ENCODE measurements at regions of chr2 and their contacts with region 1.

Region 1: DNA sequence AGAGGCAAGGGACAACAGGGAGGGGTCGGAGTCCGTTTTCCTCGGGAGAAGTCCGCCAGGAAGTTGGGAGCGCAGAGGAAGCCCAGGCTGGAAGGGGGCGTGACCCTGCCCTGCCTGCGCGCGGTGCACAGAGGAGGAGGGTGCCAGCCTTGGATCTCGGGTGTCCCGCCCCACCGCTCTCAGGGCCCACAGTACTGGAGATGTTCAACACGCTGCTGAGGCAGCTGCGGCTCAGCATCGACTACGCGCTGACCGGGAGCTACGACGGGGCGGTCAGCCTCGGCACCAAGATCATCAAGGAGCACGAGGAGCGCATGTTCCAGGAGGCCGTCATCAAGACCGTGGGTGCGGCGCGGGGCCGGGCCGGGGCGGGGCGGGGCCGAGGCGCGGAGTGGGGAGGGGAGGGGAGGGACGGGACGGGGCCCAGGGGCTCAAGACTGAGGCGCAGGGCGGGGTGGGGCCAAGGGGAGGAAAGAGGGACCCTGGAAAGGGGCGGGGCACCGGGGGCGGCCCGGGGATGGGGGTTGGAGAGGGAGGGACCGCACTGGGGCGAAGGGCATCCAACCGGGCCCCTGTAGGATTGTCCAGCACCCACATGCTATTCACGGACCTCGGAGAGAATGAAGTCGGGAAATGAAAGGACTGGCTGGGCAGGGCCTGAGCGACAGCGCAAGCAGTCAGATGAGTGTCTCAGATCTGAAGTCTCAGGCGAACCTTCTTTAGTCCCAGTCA is 36.6 kb downstream of the POMC start:
- DNase-seq: no peak
- H3K4me3 ChIP-seq: peak overlapping the region in 9 of 59 donors; percentile 8 to 42 (median 10)
- H3K27ac ChIP-seq: no peak overlapping the region
- H3K27me3 ChIP-seq: no peaks in the 10 kb centered on the region
- CTCF ChIP-seq: no peak

Region 2: DNA sequence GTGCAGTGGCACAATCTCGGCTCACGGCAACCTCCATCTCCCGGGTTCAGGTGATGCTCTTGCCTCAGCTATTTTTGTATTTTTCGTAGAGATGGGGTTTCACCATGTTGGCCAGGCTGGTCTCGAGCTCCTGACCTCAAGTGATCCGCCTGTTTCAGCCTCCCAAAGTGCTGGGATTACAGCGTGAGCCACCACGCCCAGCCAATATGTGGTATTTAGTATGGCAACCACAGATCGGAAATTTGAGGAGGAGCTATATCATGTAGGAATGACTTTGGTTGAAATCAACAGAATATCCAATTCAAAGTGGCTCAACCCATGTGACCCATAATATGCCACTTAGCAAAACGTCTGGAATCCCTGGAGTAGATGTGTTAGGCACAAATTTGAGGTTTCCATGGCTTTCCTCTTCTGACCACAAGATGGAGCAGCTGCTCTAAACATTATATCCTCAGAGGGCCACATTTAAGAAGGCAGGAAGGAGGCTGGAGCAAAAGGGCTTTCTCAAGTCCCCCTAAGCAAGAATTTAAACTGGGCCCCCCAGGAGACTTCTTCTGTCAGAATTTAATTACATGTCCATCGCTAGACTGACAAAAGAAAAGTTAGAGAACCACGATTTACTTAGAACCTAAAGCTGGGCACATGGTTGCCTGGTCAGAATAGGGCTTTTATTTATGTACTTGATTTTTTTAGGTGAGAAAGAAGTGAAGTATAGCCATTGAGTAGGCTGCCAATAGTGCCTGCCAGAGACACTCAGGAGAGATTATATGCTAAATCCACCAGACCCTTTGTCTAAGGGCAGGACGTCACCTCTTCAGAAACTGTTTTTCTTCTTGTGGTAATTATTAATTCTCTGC is 721.8 kb before region 1 on chr2:
- intact Hi-C with region 1: loop called in 1 of 2 experiments (anchors 5 kb)
- DNase-seq: peak in 3 of 10 donors; percentile 30 to 58 (median 43)
- H3K4me3 ChIP-seq: no peak overlapping the region
- H3K27ac ChIP-seq: no peak overlapping the region
- H3K27me3 ChIP-seq: no peaks in the 10 kb centered on the region
- CTCF ChIP-seq: peak; percentile 59 to 94 (median 86)

Region 3: DNA sequence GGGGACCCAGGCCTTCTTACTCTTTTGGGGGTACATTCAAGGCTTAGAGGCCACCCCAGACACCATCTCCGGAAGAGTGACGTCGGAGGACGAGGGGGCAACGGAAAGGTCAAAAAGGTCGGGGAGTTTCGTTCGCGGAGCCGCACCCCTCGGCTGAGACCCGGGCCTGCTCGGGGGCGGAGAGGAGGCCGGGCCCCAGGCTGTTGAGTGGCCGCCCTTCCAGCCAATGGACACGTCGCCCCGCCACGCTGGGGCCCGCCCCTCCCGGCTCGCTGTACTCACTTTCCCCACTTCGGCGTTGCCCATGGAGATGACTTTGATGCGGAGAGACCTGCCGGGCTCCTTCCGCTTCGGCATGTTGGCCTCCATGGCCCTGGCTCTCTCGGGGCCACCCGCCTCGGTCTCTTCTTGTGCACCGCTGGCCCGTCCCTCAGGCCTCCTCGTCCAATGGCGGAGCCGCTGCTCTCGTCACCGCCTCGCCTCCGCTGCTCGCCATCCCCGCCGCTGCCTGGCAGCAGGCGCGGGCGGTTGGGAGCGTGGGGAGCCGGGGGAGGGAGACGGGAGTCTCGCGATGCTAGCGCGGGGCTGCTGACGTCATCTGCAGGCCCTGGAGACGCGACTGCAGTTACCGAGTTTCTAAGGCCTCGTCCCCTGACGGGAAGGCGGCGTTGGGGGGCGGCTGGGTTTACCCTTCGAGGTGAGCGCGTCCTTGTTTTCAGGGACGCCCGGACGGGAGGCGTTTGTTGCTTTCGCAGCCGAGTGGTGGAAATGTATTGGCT is 160.0 kb before region 1 on chr2 and contains the start of gene DNAJC27:
- intact Hi-C with region 1: loop called (anchors 1 kb)
- DNase-seq: peak; percentile 95 to 99 (median 98)
- H3K4me3 ChIP-seq: peak within 1 kb of the TSS; percentile 61 to 98 (median 91)
- H3K27ac ChIP-seq: peak within 1 kb of the TSS; percentile 96 to 100 (median 99)
- H3K27me3 ChIP-seq: no peaks in the 10 kb centered on the region
- CTCF ChIP-seq: peak in 26 of 56 donors; percentile 4 to 45 (median 18)
- total RNA-seq, gene DNAJC27: 10.6 to 31.2 (median 20.7) TPM

Region 4: GRCh38 chr2:24993406-24994145 is 138.2 kb before region 1 on chr2:
- intact Hi-C with region 1: no loop called
- DNase-seq: no peak
- H3K4me3 ChIP-seq: no peak overlapping the region
- H3K27ac ChIP-seq: peak overlapping the region in 2 of 59 donors; percentile 18 to 19
- H3K27me3 ChIP-seq: no peaks in the 10 kb centered on the region
- CTCF ChIP-seq: no peak

Region 5: DNA sequence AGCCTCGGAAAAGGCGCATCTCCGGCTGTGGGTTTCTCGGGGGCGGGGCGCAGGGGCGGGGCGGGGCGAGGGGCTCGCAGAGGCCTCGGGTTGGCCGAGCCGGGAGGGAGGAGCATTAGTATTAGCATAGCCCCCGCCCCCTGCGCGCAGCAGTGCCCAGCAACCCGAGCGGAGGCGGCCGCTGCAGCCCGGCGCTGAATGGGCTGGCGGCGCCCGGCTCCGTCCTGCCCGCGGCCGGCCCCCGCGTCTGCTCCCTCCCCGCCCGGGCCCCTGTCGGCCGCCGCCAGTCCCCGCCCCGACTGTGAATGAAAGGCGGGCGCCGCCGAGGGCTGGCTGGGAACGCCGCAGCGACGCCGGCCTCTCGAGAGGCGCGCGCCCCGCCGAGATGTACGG is 89.8 kb before region 1 on chr2 and contains the start of gene EFR3B:
- intact Hi-C with region 1: loop called (anchors 2 to 5 kb)
- DNase-seq: peak; percentile 92 to 97 (median 96)
- H3K4me3 ChIP-seq: peak within 1 kb of the TSS; percentile 70 to 98 (median 87)
- H3K27ac ChIP-seq: peak within 1 kb of the TSS; percentile 52 to 96 (median 91)
- H3K27me3 ChIP-seq: no peaks in the 10 kb centered on the region
- CTCF ChIP-seq: peak in 16 of 56 donors; percentile 1 to 45 (median 26)
- total RNA-seq, gene EFR3B: 44.3 to 131 (median 75.5) TPM

Region 6: DNA sequence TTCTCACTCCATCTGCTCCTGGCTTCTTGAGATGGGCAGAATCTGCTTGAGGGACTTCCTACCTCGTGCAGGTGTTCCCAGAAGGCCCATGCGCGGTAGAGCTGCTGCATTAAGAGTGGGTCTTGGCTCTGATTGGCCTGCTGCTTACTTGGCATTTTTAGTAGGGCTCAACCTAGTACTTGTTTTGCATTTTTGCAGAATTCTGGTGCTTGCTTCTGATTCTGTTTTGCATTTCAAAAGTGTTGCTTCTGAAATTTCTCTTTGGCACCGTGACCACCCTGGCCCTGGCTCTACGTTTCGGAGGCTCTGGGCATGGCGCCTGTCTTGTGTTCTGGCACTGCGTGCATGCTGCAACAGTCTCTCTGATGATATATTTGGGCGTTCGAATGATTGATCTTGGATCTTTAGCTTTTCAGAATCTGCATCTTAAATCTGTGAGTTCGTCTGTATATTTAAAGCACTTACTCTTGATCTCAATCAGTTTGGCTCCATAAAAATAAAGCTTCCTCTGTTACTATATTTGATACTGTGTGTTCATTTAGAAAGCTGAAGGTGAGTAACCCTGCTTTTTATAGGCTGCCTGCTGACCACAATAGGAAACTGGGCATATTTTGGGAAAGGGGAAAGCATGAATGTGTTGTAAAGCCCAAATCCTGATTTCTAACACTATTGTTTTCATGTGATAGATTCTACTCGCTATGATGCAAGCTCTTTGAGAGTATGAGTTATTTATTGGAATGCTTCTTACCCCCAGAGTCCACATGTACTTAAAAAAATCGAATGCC is 67.7 kb before region 1 on chr2:
- intact Hi-C with region 1: loop called (anchors 5 to 10 kb)
- DNase-seq: peak in 9 of 10 donors; percentile 49 to 81 (median 73)
- H3K4me3 ChIP-seq: peak overlapping the region in 33 of 59 donors; percentile 1 to 39 (median 21)
- H3K27ac ChIP-seq: peak overlapping the region; percentile 43 to 98 (median 93)
- H3K27me3 ChIP-seq: no peaks in the 10 kb centered on the region
- CTCF ChIP-seq: no peak

Region 7: DNA sequence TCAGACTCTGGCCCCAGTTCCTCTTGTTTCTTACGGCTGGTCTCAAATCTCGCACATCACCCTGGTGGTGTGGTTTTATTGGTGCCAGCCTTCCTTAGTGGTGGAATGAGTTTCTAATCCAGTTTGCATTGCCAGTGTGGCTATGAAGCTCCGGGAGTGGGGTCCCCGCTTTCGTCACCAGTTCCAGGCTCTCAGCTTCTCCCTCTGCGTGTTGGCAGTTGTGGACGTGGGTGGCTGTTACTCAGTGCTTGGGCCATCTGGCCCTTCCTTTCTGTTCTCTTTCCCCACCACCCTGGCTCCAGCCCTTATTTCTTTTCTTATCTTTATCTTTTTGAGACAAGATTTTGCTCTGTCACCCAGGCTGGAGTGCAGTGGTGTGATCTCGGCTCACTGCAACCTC is 59.8 kb before region 1 on chr2:
- intact Hi-C with region 1: loop called (anchors 5 to 10 kb)
- DNase-seq: peak in 9 of 10 donors; percentile 34 to 83 (median 64)
- H3K4me3 ChIP-seq: no peak overlapping the region
- H3K27ac ChIP-seq: peak overlapping the region in 38 of 59 donors; percentile 4 to 77 (median 52)
- H3K27me3 ChIP-seq: no peaks in the 10 kb centered on the region
- CTCF ChIP-seq: no peak

Region 8: DNA sequence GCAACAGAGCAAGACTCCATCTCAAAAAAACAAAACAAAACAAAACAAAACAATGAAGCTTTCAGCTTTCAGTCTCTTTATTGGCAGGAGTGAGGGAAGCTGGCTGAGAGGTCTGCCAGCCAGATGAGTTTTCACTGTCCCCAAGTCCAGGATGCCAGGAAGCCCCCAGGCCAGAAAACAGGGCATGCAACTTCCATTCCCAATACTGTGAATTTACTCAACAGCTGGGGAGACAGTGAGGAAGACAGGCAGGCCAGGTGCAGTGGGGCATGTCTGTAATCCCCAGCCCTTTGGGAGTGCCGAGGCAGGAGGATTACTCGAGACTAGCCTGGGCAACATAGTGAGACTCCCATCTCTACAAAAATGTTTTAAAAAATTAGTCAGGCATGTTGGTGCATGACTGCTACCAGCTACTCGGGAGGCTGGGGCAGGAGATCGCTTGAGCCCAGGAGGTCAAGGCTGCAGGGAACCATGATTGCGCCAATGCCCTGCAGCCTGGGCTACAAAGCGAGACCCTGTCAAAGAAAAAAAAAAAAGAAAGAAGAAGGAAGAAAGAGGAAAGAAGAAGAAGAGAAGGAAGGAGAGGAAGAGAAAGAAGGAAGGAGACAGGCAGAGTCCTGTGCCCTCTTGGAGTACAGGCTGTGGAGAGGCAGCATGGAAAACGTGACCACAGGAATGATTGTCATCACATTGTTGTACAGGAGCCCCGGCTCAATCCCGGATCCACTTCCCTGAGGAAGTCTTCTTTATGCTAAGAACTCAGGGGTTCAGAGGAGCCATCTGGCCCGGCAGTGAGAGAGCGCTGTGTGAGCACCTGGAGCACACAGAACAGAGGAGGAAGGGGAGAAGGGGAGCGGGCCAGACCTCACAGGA is 65.8 kb after region 1 on chr2:
- intact Hi-C with region 1: loop called (anchors 5 kb)
- DNase-seq: no peak
- H3K4me3 ChIP-seq: peak overlapping the region in 1 of 59 donors; percentile 6
- H3K27ac ChIP-seq: peak overlapping the region in 7 of 59 donors; percentile 0 to 71 (median 37)
- H3K27me3 ChIP-seq: no peaks in the 10 kb centered on the region
- CTCF ChIP-seq: no peak

Region 9: DNA sequence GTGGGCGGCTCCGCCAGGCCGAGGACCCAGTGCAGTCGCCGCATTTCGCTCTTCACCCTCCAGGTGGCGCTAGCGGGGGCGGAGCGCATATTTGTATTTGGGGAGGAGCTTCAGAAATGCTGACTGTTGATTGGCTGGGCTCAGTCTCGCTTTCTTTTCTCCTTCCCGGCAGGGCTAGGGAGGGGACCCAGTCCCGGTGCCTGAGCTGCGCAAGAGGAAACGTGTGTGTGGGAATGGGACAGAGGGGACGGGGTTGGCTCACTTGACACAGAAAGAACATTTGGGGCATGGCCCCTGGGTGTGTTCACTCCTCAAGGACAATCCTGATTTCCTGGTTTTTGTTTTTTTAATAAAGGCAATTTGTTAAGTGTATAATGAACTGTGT is 230.3 kb after region 1 on chr2:
- intact Hi-C with region 1: no loop called
- DNase-seq: peak; percentile 86 to 93 (median 90)
- H3K4me3 ChIP-seq: peak overlapping the region; percentile 35 to 74 (median 55)
- H3K27ac ChIP-seq: peak overlapping the region in 46 of 59 donors; percentile 4 to 80 (median 52)
- H3K27me3 ChIP-seq: no peaks in the 10 kb centered on the region
- CTCF ChIP-seq: peak; percentile 93 to 99 (median 98)

Measured in dorsolateral prefrontal cortex (tissue), 120 donors.